HCT116 (cell line): ENCODE measurements at regions of chr12 and their contacts with region 1.

Region 1: DNA sequence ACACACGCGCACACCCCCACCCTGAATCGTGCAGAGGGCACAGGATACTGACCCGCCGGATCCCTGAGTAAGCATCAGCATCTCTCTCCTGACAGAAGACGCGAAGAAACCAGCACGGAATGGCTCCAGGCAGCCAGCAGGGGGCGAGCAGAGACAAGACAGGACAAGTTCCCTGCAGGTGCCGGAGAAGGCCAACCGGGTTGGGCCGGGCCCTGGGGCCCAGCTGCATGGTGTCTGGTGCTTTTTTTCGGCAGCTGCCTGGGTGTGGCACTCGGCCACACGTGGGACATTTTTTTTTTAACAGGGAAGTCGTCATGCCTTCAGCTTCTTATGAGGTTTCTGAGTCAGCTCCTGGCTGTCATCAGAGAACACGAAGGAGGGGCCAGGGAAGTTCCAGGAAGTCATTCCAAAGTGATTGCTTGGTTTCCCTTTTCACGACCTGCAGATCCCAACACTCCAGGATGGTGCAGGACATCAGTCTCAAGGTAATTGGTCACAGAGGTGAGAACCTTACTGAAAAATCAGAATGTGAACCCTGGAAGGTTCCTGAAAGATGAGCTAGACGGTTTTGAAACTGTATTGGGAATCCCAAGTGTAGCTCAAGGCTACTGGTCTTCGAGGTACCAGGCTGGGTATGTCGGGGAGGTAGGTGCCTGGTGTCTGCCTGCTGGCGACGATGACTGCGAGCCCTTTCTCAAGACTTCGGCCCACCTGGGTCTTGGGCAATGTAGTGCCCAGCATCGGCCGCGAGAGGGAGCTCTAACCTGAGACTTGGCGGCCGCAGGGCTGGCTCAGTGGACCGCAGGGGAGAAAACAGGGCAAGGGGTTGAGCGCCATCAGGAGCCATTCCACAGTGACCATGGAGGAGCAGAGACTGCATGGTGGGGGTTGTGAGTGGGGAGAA is 190.8 kb upstream of the PRMT8 start:
- DNase-seq: peak; percentile 92
- ATAC-seq: peak; percentile 75
- H3K4me3 ChIP-seq: peak overlapping the region; percentile 28 to 40
- H3K27ac ChIP-seq: peak overlapping the region; percentile 83
- H3K4me1 ChIP-seq: peaks cover 24 to 39% of the 10 kb centered on the region in 2 experiments
- H3K27me3 ChIP-seq: no peaks in the 10 kb centered on the region
- CTCF ChIP-seq: peak; percentile 78 to 97 (median 95)
- POLR2A ChIP-seq: no peak
- RAD21 ChIP-seq: peak; percentile 93

Region 2: DNA sequence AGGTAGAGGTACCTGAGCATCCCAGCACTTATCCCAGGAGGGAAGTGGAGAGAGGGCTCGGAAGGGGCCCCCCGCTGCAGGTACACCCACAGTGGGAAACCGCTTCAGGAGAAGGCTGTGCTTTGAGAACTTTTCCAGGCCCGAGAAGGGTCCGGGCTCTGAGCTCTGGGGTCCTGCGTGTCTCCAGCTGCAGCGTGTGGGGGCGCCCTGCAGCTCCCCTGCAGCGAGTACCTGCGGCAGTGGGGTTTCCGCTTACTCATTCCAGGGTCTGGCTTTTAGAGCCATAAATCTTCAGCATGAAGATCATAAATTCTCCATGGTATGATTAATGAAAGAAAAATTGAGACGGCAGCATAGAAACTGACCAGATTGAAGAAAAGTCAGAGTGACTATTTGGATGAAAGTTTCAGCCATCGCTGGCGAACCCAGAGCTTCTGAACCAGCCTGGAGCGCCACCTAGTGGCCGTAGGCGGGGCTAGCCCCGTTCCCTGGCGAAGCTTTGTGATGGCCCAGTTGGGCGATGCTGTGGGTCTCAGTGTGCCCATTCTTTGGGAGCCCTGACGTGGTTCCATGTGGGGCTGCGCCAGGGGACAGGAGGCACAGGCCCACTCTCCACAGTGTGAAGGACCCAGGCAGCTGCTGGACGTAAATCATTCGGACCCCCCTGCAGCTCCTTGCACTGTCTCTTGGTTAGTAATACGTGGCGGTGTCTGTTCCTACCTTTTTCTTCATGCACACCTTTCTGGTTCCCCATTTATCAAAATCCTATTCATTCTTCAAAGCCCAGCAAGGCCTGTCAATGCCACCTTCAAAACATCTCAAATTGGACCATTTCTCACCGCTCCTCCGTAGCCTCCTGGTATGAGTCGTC is 24.8 kb before region 1 on chr12:
- CTCF ChIA-PET with region 1: interaction called, 12 read pairs
- POLR2A ChIA-PET with region 1: no interaction called
- RAD21 ChIA-PET with region 1: no interaction called
- intact Hi-C with region 1: no loop called
- DNase-seq: peak; percentile 24
- ATAC-seq: peak; percentile 82
- H3K4me3 ChIP-seq: no peak overlapping the region
- H3K27ac ChIP-seq: no peak overlapping the region
- H3K4me1 ChIP-seq: peaks cover 7 to 28% of the 10 kb centered on the region in 2 experiments
- H3K27me3 ChIP-seq: no peaks in the 10 kb centered on the region
- CTCF ChIP-seq: peak; percentile 87 to 97 (median 96)
- POLR2A ChIP-seq: no peak
- RAD21 ChIP-seq: peak; percentile 92

Region 3: DNA sequence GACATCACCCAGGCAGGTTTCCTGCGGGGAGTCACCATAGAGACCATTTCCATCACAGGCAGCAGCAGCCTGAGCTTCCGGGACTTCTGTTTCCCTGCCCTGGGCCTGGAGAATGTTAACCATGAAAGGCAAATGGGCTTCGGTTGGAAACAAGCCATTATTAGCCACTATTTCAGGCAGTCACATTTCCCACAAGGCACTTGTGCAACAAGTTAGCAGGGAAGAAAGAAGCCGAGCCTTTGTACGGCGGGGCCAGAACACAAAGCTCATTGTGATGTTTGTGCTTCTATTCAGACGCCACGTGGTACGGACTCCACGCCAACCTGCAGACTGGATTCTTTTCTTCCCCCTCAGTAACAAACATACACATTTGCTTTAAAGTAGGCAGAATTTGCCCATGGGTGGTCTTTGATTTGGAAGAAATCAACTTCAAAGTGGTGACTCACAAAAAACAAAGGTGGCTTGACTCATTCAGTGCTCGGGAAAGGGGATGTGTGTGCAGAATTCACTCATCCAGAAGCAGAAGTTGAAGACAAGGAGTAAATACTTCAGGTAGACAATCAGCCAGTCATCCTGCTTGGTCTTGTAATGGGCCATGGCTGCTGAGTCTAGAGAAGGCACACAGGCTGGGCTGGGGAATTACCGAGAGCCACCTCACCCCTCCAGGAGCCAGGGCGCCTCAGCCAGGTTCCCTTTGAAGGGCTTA is 36.6 kb after region 1 on chr12:
- CTCF ChIA-PET with region 1: interaction called, 21 read pairs
- POLR2A ChIA-PET with region 1: no interaction called
- RAD21 ChIA-PET with region 1: interaction called, 3 to 4 read pairs
- intact Hi-C with region 1: no loop called
- DNase-seq: peak; percentile 86
- ATAC-seq: peak; percentile 78
- H3K4me3 ChIP-seq: peak overlapping the region in 1 of 2 experiments; percentile 29; a peak in 3 of 4 replicates
- H3K27ac ChIP-seq: peak overlapping the region; percentile 76
- H3K4me1 ChIP-seq: peaks cover 33 to 52% of the 10 kb centered on the region in 2 experiments
- H3K27me3 ChIP-seq: no peaks in the 10 kb centered on the region
- CTCF ChIP-seq: no peak
- POLR2A ChIP-seq: no peak
- RAD21 ChIP-seq: 0 out of 2 replicates have a peak, but pooled peaks have one; percentile 6

Region 4: GRCh38 chr12:3463921-3464320 is 163.7 kb after region 1 on chr12:
- CTCF ChIA-PET with region 1: interaction called, 43 read pairs
- POLR2A ChIA-PET with region 1: no interaction called
- RAD21 ChIA-PET with region 1: interaction called in 1 of 2 experiments, 3 read pairs
- intact Hi-C with region 1: no loop called
- DNase-seq: no peak
- ATAC-seq: no peak
- H3K4me3 ChIP-seq: no peak overlapping the region
- H3K27ac ChIP-seq: no peak overlapping the region
- H3K4me1 ChIP-seq: peaks cover 0 to 4% of the 10 kb centered on the region in 2 experiments; a peak in 1 of 4 replicates
- H3K27me3 ChIP-seq: peaks cover 9% of the 10 kb centered on the region; the same call in 1 of the 2 replicates
- CTCF ChIP-seq: no peak
- POLR2A ChIP-seq: no peak
- RAD21 ChIP-seq: no peak

Region 5: DNA sequence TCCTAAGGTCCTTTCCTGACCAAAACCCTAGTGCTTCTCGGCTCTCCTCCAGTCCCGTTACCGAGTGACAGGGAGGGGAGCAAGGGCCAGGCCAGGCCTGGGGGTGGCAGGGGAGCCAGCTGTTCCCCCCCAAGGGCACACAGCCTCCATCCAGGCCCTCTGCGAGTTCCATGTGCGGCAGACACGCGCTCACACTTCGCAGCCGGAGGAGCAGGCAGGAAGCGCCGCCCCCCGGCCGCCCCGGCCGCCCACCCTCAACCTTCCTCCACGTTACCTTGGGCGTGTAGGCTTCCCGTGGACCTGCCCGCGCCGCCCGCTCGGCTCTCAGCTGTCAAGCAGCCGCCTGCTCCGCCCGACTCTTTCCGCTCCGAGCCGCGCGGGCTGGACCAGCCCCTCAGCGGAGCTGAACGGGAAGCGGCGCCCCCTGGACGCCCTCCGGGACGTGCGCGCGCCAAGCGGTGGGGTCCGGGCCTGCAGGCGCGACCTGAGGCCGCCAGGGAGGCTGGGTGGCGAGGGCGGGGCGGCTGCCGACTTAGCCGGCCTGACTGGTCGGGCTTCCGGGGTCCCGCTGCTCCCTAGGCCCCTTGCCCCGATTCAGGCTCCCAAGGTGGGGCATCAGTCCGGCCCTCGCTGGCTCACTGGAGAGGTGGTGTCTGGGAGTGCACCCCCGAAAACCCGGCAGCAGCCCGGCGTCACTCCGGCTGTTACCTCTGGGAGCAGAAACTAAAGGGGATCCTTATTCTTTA is 452.7 kb after region 1 on chr12 and contains the start of gene CRACR2A:
- CTCF ChIA-PET with region 1: interaction called, 8 read pairs
- POLR2A ChIA-PET with region 1: no interaction called
- RAD21 ChIA-PET with region 1: no interaction called
- intact Hi-C with region 1: loop called (anchors 2 kb)
- DNase-seq: peak; percentile 32
- ATAC-seq: peak; percentile 92
- H3K4me3 ChIP-seq: peak within 1 kb of the TSS; percentile 75 to 80
- H3K27ac ChIP-seq: peak within 1 kb of the TSS; percentile 65
- H3K4me1 ChIP-seq: peaks cover 12 to 26% of the 10 kb centered on the region in 2 experiments; a peak in 3 of 4 replicates
- H3K27me3 ChIP-seq: no peaks in the 10 kb centered on the region
- CTCF ChIP-seq: peak; percentile 59 to 81 (median 70); a peak in 5 of 6 replicates
- POLR2A ChIP-seq: peak; percentile 31
- RAD21 ChIP-seq: 0 out of 2 replicates have a peak, but pooled peaks have one; percentile 27
- total RNA-seq, gene CRACR2A: 18.4 TPM

Region 6: DNA sequence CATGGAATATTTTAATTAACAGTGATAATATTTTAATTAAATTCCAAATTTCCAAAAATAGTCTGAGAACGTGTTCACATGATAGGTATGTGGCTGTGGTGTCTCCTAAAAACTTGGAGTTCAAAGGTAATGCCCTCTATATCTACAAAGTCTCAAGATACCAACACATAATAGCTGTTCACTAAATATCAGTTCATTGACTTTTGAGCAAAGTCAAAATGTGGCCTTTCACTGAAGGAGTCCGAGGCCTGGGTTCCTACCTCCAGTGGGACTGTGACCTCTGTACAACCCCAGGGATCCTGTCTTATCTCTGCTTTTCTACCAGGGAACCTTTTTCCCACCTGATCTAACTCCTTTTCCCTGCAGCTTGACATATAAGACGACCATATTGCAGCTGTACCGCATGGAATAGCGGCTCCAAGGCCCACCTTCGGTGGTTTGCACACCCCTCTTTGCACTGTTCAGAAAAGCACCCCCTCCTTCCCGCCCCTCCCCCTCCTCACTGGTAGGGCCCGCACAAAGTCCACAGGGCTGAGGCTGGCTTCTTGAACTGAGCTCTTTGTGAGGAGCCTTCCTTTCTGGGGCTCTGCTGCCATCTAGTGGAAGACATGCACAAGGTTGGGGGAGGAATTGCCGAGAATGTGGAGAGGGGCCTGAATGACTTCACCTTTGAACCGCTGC is 976.5 kb after region 1 on chr12:
- CTCF ChIA-PET with region 1: interaction called, 17 read pairs
- POLR2A ChIA-PET with region 1: interaction called, 3 read pairs
- RAD21 ChIA-PET with region 1: no interaction called
- intact Hi-C with region 1: loop called (anchors 2 kb)
- DNase-seq: peak; percentile 67
- ATAC-seq: peak; percentile 92
- H3K4me3 ChIP-seq: no peak overlapping the region
- H3K27ac ChIP-seq: no peak overlapping the region
- H3K4me1 ChIP-seq: peaks cover 5 to 13% of the 10 kb centered on the region in 2 experiments; a peak in 3 of 4 replicates
- H3K27me3 ChIP-seq: peaks cover 28% of the 10 kb centered on the region
- CTCF ChIP-seq: peak; percentile 65 to 92 (median 88); a peak in 5 of 6 replicates
- POLR2A ChIP-seq: no peak
- RAD21 ChIP-seq: peak; percentile 89